Ascending aorta (tissue), 2 donors: ENCODE measurements at regions of chr6 and their contacts with region 1.

Region 1: DNA sequence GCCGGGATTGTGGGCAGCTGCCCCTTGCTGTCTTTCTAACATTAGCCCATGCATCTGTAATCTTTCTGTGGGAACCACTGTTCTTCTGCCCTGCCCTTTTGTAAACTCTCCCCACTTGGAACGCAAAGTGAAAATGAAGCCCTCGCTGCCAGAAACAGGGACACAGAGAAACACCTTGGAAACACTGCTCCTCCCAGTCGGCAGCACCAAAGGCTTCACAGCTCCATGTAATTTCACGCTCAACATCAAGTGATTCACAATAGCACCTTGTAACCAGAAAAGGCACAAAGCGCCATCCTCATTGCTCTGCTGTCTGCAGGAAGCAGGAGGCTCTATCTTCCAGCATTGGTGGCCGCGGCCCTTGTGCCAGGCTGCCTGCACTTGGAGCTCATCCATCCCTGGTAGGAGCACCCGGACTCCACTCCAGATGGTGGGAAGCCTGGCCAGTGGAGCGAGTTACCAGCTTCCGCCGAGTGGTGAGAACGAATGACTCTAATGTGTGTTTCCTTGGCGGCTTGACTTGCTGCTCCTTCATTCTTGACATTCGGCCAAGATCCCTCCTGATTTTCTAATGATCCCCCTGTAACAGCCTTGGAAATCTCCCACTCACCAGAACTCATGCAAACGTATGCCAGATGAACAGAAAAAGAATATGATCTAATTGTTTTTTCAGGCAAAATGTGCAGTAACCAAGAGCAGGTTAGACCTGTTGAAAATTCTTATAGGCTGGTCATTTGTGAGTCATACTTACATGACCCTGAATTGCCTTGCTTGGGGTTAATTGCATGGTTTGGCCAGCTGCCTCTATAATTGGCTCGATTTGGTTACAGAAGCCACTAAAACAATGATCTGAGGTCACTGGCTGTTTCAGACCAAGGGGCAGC is 169.1 kb upstream of the CDYL start:
- DNase-seq: peak in 1 of 2 donors; percentile 72
- H3K4me3 ChIP-seq: peak overlapping the region; percentile 29
- H3K27ac ChIP-seq: peak overlapping the region; percentile 55 to 61
- H3K4me1 ChIP-seq: peaks cover 0 to 17% of the 10 kb centered on the region in 2 donors
- H3K27me3 ChIP-seq: no peaks in the 10 kb centered on the region
- CTCF ChIP-seq: no peak

Region 2: DNA sequence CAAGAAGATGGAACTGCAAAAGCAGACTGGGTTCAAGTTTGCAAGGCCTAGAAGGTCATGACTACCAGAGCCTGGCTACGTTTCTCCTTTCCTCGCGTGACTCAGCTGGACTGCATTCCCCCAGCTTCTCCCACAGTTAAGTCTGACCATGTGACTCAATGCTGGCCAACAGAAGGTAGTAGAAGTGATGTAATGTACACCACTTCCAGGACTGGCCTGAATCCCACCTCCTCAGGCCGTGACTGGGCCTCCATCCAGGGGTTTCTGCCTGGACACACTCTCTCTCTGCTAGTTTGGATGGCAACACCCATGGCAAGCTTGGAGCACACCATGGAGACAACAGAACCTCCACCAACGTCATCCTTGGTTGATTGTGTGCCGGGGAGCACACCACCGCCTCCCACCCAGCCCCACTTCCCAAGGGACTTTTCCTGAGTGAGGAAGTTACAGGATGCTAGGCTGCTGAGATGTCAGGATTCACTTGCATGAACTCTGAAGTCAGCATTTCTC is 57.1 kb after region 1 on chr6:
- intact Hi-C with region 1: loop called (anchors 5 kb)
- DNase-seq: peak; percentile 58 to 88
- H3K4me3 ChIP-seq: no peak overlapping the region
- H3K27ac ChIP-seq: peak overlapping the region; percentile 31 to 41
- H3K4me1 ChIP-seq: peaks cover 0 to 2% of the 10 kb centered on the region in 2 donors
- H3K27me3 ChIP-seq: no peaks in the 10 kb centered on the region
- CTCF ChIP-seq: no peak